ENCODE measurements at regions of chr11 and their contacts with region 1.

Region 1: GRCh38 chr11:108364159-108364558 is 103.2 kb downstream of the C11orf65 start:
- DNase-seq: no peak
- ATAC-seq: no peak
- H3K4me3 ChIP-seq: no peak overlapping the region
- H3K4me3 Mint-ChIP-seq: no peak overlapping the region
- H3K27ac ChIP-seq: no peak overlapping the region
- H3K27ac Mint-ChIP-seq: peak overlapping the region in 1 of 2 donors; percentile 34
- H3K4me1 ChIP-seq: no peaks in the 10 kb centered on the region
- H3K4me1 Mint-ChIP-seq: no peaks in the 10 kb centered on the region
- H3K27me3 ChIP-seq: no peaks in the 10 kb centered on the region
- H3K27me3 Mint-ChIP-seq: no peaks in the 10 kb centered on the region

Region 2: GRCh38 chr11:108351458-108351857 is 12.7 kb before region 1 on chr11:
- CTCF ChIA-PET with region 1: no interaction called
- POLR2A ChIA-PET with region 1: interaction called, 3 to 13 read pairs
- DNase-seq: no peak
- ATAC-seq: no peak
- H3K4me3 ChIP-seq: no peak overlapping the region
- H3K4me3 Mint-ChIP-seq: no peak overlapping the region
- H3K27ac ChIP-seq: no peak overlapping the region
- H3K27ac Mint-ChIP-seq: peak overlapping the region in 1 of 2 donors; percentile 27
- H3K4me1 ChIP-seq: no peaks in the 10 kb centered on the region
- H3K4me1 Mint-ChIP-seq: peaks cover 0 to 14% (median 2%) of the 10 kb centered on the region in 3 donors
- H3K27me3 ChIP-seq: no peaks in the 10 kb centered on the region
- H3K27me3 Mint-ChIP-seq: no peaks in the 10 kb centered on the region

Measured in T-cell (primary cell).